ENCODE measurements at regions of chr2 and their contacts with region 1.

Region 1: DNA sequence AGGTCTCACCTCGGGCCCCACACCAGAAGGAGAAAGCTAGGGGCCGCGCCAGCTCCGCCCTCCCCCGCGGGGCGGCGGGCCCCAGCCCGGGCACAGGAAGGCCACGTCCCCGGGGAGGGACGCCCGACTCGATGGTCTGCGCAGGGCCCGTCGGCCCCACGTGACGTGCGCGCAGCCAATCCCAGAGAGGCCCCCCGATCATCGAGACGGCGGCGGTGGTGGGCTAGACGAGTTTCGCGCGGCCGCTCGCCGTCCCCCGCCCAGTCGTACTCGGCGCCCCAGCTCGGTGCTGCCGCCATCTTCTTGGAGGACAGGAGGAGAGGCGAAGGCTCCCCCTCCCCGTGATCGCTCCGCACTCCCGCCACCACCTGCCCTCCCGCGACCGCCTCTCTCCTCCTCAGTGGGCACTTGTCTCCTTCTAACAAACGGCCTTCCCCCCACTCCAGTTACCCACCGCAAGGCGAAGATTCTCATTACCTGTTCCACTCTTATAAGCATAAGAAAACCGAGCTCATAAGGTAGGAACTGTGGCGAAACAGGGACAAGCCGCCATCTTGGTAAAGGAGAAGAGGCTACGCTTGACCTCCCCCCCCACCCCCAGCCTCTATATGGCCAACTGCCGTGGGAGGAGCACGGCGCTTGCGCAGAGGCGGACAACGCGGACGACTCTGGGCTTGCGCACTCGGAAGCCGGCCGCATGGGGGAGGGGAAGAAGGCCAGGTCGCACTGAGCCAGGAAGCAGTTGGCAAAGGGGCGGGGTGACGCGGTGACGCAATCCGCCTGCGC is at the start of gene HDLBP:
- DNase-seq: peak; percentile 98
- H3K4me3 ChIP-seq: peak within 1 kb of the TSS; percentile 96 to 99 (median 99)
- H3K27ac ChIP-seq: peak within 1 kb of the TSS; percentile 98
- H3K4me1 ChIP-seq: peaks cover 43% of the 10 kb centered on the region
- H3K27me3 ChIP-seq: no peaks in the 10 kb centered on the region
- CTCF ChIP-seq: peak in 1 of 2 donors; percentile 24
- total RNA-seq, gene HDLBP: 617 to 628 TPM

Region 2: GRCh38 chr2:241271641-241272297 is 43.5 kb before region 1 on chr2:
- CTCF ChIA-PET with region 1: no interaction called
- dilution Hi-C with region 1: loop called (anchors 5 kb)
- in situ Hi-C with region 1: no loop called
- intact Hi-C with region 1: loop called (anchors 2 kb)
- DNase-seq: peak; percentile 75
- H3K4me3 ChIP-seq: peak overlapping the region; percentile 60 to 74 (median 61)
- H3K27ac ChIP-seq: peak overlapping the region; percentile 56
- H3K4me1 ChIP-seq: peaks cover 31% of the 10 kb centered on the region
- H3K27me3 ChIP-seq: no peaks in the 10 kb centered on the region
- CTCF ChIP-seq: no peak

Region 3: GRCh38 chr2:241289597-241289996 is 25.7 kb before region 1 on chr2:
- CTCF ChIA-PET with region 1: interaction called, 5 read pairs
- dilution Hi-C with region 1: no loop called
- in situ Hi-C with region 1: no loop called
- intact Hi-C with region 1: loop called (anchors 2 kb)
- DNase-seq: no peak
- H3K4me3 ChIP-seq: no peak overlapping the region
- H3K27ac ChIP-seq: no peak overlapping the region
- H3K4me1 ChIP-seq: peaks cover 23% of the 10 kb centered on the region
- H3K27me3 ChIP-seq: no peaks in the 10 kb centered on the region
- CTCF ChIP-seq: peak; percentile 1 to 26

Region 4: DNA sequence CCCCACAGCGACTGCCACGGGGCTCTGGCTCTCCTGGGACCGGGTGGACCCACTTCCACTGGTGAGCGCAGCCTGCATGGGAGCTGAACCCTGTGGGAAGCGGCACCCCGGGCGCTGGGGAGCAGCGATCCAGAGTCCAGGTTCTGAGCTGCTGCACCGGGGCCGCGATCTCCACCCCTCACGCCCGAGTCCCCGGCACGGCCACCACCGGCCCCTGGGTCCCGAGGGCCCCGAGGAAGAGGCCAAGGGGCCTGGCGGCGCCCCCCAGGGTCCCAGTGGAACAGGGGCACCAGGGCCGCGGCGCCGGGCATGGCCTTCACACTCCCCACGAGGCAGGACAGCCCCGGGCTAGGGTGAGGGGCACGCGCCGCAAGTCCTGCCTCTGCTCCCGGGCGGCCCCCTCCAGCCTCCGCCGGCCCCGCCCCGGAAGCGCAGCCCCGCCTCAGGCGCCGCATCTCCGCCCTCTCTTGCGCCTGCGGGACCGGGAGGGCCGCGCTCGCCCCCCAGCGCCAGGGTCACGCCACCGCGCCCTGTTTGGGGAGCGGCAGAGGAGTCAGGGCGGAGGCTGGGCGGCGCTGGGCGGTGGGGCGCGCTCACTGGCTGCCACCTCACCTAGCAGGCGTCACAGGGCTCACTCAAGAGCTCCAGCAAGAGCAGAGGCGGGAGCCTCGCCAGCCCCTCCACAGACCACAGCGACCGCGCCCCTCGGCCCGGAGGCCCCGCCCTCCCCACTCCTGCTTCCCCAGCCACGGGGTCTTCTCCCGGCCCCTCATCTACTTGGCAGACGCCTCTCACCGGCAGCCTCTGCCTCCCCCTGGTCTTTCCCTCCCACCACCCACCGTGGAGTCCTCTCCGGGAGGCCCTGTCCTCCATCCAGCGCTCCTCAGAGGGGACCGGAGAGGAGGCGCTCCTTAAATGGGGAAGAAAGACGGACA is 294.8 kb after region 1 on chr2:
- CTCF ChIA-PET with region 1: no interaction called
- dilution Hi-C with region 1: no loop called
- in situ Hi-C with region 1: no loop called
- intact Hi-C with region 1: no loop called
- DNase-seq: peak; percentile 81
- H3K4me3 ChIP-seq: peak overlapping the region; percentile 33 to 44 (median 43)
- H3K27ac ChIP-seq: peak overlapping the region; percentile 46
- H3K4me1 ChIP-seq: peaks cover 11% of the 10 kb centered on the region
- H3K27me3 ChIP-seq: no peaks in the 10 kb centered on the region
- CTCF ChIP-seq: peak; percentile 48 to 57